ENCODE measurements at regions of chr9 and their contacts with region 1.

Region 1: DNA sequence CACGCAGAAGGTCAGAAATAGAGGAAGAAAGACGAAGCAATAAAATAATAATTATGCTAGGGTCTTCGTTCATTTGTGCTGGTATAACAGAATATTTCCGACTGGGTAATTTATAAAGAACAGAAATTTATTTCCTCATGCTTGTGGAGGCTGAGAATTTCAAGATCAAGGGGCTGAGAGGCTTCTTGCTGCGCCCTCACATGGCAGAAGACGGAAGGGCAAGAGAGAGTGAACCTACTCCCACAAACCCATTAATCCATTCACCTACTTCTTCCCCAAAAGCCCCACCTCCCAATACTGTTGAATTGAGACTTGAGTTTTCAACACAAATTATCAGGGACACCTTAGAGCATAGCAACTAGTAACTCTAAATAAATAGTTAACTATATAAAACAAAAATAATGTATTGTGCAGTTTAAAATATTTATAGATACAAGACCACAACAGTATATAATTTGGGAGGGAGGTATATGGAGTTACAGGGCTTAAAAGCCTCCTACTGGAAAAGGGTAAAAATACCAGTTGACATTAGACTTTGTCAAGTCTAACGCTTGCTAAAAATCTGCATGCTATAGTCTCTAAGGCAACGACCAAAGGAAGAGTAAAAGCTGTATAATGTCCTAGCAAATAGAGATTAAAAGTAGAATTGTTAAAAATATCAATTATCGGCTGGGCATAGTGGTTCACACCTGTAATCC is 40.3 kb upstream of the NAA35 start:
- DNase-seq: peak; percentile 10 to 90
- H3K4me3 ChIP-seq: no peak overlapping the region
- H3K27ac ChIP-seq: no peak overlapping the region
- H3K4me1 ChIP-seq: no peaks in the 10 kb centered on the region
- H3K27me3 ChIP-seq: no peaks in the 10 kb centered on the region
- CTCF ChIP-seq: peak; percentile 68 to 79 (median 75)
- EP300 ChIP-seq: no peak
- POLR2A ChIP-seq: no peak
- RAD21 ChIP-seq: peak; percentile 66 to 72

Region 2: DNA sequence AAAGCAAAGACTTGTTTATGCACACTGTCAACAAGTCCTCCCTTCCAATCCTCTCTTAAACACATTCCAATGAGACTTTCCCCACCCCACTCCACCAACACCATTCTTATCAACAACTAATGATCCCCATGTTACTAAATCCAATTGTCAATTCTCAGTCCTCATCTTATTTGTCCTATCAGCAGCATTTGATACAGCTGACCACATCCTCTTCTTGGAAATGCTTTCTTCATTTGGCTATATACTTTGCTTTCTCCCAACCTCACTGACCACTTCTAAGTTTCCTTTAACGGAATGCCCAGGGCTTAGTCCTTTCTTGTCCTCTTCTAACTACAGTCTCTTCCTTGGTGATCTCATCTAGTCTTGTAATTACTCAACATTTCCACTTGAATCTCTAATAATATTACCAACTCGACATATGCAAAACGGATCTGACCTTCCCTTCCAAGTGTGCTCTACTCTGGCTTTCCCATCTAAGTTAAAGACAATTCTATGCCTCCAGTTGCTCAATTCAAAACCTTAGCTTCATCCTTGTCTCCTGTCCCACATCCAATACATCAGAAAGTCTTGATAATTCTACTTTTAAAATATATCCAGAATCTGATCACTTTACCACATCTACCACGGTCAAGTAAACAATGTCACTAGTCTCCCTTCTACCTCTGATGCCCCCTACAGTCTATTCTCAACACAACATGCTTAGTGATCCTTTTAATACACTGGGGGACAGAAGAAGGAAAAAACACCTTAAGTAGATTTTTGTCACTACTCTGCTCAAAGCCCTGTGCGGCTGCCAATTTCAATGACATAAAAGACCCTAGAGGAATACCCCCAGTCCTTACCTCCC is 184.4 kb before region 1 on chr9:
- CTCF ChIA-PET with region 1: no interaction called
- POLR2A ChIA-PET with region 1: no interaction called
- DNase-seq: no peak
- H3K4me3 ChIP-seq: no peak overlapping the region
- H3K27ac ChIP-seq: no peak overlapping the region
- H3K4me1 ChIP-seq: no peaks in the 10 kb centered on the region
- H3K27me3 ChIP-seq: no peaks in the 10 kb centered on the region
- CTCF ChIP-seq: peak in 2 of 3 experiments; percentile 22 to 51; a peak in 2 of 4 replicates
- EP300 ChIP-seq: no peak
- POLR2A ChIP-seq: no peak
- RAD21 ChIP-seq: peak; percentile 15 to 30; a peak in 3 of 4 replicates

Region 3: DNA sequence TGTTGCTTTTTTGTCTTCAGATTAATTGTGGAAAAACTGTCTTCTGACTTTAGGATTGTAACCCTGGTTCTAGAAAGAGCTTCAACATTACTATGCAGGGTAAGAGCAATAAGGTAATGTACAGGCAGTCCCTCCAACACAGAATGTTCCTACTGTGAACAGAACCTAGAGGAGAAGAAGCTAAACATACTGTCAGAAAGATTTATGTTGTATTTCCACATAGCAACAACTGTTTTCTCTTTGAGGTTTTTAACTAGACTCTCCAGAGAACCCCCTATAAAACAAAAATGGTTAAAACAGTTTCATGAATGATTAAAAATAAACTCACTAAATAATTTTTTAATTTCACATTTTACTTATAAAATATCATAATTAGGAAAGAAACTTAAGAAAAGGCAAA is 24.0 kb before region 1 on chr9:
- CTCF ChIA-PET with region 1: interaction called, 15 read pairs
- POLR2A ChIA-PET with region 1: interaction called, 3 read pairs
- DNase-seq: no peak
- H3K4me3 ChIP-seq: no peak overlapping the region
- H3K27ac ChIP-seq: no peak overlapping the region
- H3K4me1 ChIP-seq: peaks cover 0 to 3% (median 2%) of the 10 kb centered on the region in 4 experiments; a peak in 4 of 7 replicates
- H3K27me3 ChIP-seq: no peaks in the 10 kb centered on the region
- CTCF ChIP-seq: no peak
- EP300 ChIP-seq: no peak
- POLR2A ChIP-seq: no peak
- RAD21 ChIP-seq: no peak

Region 4: DNA sequence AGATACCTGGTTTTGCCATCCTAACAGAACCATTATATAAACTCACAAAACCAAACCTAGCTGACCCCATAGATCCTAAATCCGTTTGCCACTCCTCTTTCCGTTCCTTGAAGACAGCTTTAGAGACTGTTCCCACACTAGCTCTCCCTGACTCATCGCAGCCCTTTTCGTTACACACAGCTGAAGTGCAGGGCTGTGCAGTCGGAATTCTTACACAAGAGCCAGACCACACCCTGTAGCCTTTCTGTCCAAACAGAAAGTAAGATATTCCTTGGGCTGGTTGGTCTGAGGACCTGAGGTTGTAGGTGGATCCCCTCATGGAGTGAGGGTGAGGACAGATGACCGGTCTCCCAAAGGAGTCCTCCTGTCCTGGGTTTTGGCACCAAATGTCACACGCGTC is 16.4 kb before region 1 on chr9:
- CTCF ChIA-PET with region 1: interaction called, 15 read pairs
- POLR2A ChIA-PET with region 1: no interaction called
- DNase-seq: no peak
- H3K4me3 ChIP-seq: no peak overlapping the region
- H3K27ac ChIP-seq: no peak overlapping the region
- H3K4me1 ChIP-seq: peaks cover 0 to 2% (median 0%) of the 10 kb centered on the region in 4 experiments; a peak in 2 of 7 replicates
- H3K27me3 ChIP-seq: no peaks in the 10 kb centered on the region
- CTCF ChIP-seq: no peak
- EP300 ChIP-seq: no peak
- POLR2A ChIP-seq: no peak
- RAD21 ChIP-seq: no peak